ENCODE measurements at regions of chr14 and their contacts with region 1.

Region 1: GRCh38 chr14:21917699-21918436 is 244.2 kb upstream of the OR4E1 start:
- DNase-seq: peak; percentile 84
- ATAC-seq: peak; percentile 65
- H3K4me3 Mint-ChIP-seq: peak overlapping the region; percentile 78
- H3K27ac Mint-ChIP-seq: peak overlapping the region; percentile 81
- H3K4me1 Mint-ChIP-seq: peaks cover 73% of the 10 kb centered on the region
- H3K27me3 Mint-ChIP-seq: no peaks in the 10 kb centered on the region

Region 2: DNA sequence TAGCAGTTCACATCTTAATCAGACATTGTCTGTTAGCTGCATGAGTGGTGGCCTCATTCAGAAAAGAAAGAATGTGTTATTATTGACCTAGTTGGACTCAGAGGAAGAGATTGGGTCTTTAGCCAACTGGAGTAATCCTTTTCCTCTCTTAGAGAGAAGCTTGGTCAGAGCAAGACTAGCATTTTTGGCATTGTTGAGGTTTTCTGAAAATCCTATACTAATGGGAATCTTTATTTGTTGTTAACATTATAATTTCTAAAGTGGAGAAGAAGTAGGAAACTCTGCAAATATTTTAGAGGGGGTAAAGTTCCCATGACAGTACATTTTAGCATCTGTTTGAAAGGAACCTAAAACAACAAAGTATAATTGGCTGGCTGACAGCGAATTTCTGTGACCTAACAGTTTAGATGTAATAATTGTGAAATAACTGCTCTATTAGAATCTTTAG is 431.2 kb before region 1 on chr14:
- CTCF ChIA-PET with region 1: no interaction called
- POLR2A ChIA-PET with region 1: no interaction called
- DNase-seq: no peak
- ATAC-seq: no peak
- H3K4me3 Mint-ChIP-seq: no peak overlapping the region
- H3K27ac Mint-ChIP-seq: no peak overlapping the region
- H3K4me1 Mint-ChIP-seq: no peaks in the 10 kb centered on the region
- H3K27me3 Mint-ChIP-seq: no peaks in the 10 kb centered on the region

Region 3: DNA sequence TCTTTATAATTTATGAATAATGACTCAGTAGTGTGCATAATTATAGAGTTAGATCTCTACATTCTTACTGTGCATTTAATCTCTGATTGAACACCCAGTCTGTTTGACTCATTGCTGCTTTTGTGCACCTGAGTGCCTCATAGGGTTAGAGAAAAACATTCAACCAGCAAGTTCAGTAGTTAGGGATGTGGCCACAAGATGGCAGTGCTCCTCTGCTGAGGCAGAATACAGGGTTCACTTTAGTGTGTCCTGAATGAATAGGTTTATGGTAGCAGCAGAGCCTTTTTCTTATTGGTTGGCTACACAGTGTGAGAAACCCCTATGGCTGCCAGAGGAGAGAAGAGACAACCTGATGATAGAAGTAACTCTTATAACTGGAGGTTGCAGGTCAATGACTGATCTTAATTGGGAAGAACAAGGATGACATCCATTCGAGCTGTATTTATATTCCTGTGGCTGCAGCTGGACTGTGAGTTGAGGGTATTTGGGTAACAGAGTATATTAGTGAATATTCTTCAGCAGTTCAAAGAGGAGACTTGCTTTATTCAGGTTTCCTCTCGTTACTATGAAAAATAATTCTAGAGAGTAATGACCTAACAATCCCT is 49.3 kb before region 1 on chr14:
- CTCF ChIA-PET with region 1: interaction called, 26 read pairs
- POLR2A ChIA-PET with region 1: no interaction called
- DNase-seq: peak; percentile 87
- ATAC-seq: peak; percentile 98
- H3K4me3 Mint-ChIP-seq: peak overlapping the region; percentile 58
- H3K27ac Mint-ChIP-seq: peak overlapping the region; percentile 65
- H3K4me1 Mint-ChIP-seq: peaks cover 24% of the 10 kb centered on the region
- H3K27me3 Mint-ChIP-seq: peaks cover 3% of the 10 kb centered on the region

Region 4: GRCh38 chr14:21933681-21934080 is 15.8 kb after region 1 on chr14:
- CTCF ChIA-PET with region 1: interaction called, 59 read pairs
- POLR2A ChIA-PET with region 1: interaction called, 3 read pairs
- DNase-seq: no peak
- ATAC-seq: no peak
- H3K4me3 Mint-ChIP-seq: no peak overlapping the region
- H3K27ac Mint-ChIP-seq: no peak overlapping the region
- H3K4me1 Mint-ChIP-seq: peaks cover 7% of the 10 kb centered on the region
- H3K27me3 Mint-ChIP-seq: peaks cover 5% of the 10 kb centered on the region

Region 5: DNA sequence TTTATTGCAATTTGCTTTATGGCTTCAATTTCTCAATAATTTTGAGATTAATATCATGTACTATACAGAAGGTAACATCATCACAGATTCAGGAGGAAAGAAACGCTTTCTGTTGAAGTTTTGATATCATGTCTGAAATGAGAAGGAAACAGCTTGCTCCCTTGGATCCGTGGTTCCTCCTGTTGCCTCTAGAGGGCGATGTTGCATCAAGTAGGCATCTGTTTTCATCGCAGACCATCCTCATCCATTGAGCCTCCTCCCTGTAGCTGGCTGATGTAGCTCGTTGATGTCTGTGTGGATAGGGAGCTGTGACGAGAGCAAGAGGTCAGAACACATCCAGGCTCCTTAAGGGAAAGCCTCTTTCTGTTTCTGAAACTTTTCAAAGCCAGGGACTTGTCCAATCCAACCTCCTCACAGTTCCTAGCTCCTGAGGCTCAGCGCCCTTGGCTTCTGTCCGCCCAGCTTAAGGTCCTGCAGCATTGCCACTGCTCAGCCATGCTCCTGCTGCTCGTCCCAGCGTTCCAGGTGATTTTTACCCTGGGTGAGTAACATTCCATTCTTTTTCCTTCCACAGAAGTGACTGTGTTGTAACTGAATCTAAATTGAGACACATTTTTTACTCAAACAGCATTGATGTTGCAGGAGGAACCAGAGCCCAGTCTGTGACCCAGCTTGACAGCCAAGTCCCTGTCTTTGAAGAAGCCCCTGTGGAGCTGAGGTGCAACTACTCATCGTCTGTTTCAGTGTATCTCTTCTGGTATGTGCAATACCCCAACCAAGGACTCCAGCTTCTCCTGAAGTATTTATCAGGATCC is 60.5 kb after region 1 on chr14:
- CTCF ChIA-PET with region 1: interaction called, 99 read pairs
- POLR2A ChIA-PET with region 1: no interaction called
- DNase-seq: peak; percentile 77
- ATAC-seq: peak; percentile 84
- H3K4me3 Mint-ChIP-seq: peak overlapping the region; percentile 69
- H3K27ac Mint-ChIP-seq: peak overlapping the region; percentile 53
- H3K4me1 Mint-ChIP-seq: peaks cover 23% of the 10 kb centered on the region
- H3K27me3 Mint-ChIP-seq: peaks cover 27% of the 10 kb centered on the region

Region 6: GRCh38 chr14:22002860-22003309 is 85.0 kb after region 1 on chr14:
- CTCF ChIA-PET with region 1: interaction called, 30 read pairs
- POLR2A ChIA-PET with region 1: no interaction called
- DNase-seq: peak; percentile 86
- ATAC-seq: peak; percentile 80
- H3K4me3 Mint-ChIP-seq: peak overlapping the region; percentile 77
- H3K27ac Mint-ChIP-seq: peak overlapping the region; percentile 76
- H3K4me1 Mint-ChIP-seq: peaks cover 40% of the 10 kb centered on the region
- H3K27me3 Mint-ChIP-seq: no peaks in the 10 kb centered on the region

Region 7: GRCh38 chr14:22556990-22557623 is 639.2 kb after region 1 on chr14:
- CTCF ChIA-PET with region 1: interaction called, 26 read pairs
- POLR2A ChIA-PET with region 1: interaction called, 14 read pairs
- DNase-seq: peak; percentile 94
- ATAC-seq: peak; percentile 24
- H3K4me3 Mint-ChIP-seq: peak overlapping the region; percentile 76
- H3K27ac Mint-ChIP-seq: peak overlapping the region; percentile 97
- H3K4me1 Mint-ChIP-seq: peaks cover 90% of the 10 kb centered on the region
- H3K27me3 Mint-ChIP-seq: no peaks in the 10 kb centered on the region